ENCODE measurements at regions of chr3 and their contacts with region 1.

Region 1: GRCh38 chr3:13091898-13092611 is 18.8 kb upstream of the IQSEC1 start:
- DNase-seq: peak; percentile 81
- H3K4me3 ChIP-seq: no peak overlapping the region
- H3K27ac ChIP-seq: no peak overlapping the region
- H3K4me1 ChIP-seq: peaks cover 29% of the 10 kb centered on the region
- CTCF ChIP-seq: peak; percentile 91

Region 2: DNA sequence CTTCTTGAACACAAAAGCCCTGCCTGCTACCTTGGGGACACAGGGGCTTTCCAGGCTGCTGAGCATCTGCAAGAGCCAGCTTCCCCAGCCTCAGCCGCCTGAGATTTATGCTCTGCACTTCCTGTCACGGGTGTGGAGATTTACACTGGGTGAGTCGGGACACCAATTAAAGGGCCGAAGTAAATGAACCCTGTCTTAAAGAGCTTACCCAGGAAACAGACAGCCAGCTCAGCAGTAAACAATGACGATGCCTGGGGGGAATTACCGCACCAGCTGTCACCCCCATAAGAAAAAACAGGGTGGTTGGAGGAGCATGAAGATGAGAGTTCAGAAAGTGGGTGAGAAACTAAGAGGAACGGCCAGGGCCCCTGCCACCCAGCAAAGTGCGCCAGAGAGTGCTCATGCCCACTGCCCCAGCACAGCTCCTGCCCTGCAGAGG is 18.6 kb after region 1 on chr3:
- CTCF ChIA-PET with region 1: interaction called, 12 read pairs
- POLR2A ChIA-PET with region 1: interaction called, 3 read pairs
- intact Hi-C with region 1: no loop called
- DNase-seq: peak; percentile 94
- H3K4me3 ChIP-seq: peak overlapping the region; percentile 54
- H3K27ac ChIP-seq: peak overlapping the region; percentile 84
- H3K4me1 ChIP-seq: peaks cover 45% of the 10 kb centered on the region
- CTCF ChIP-seq: no peak

Region 3: GRCh38 chr3:13235079-13235478 is 143.0 kb after region 1 on chr3:
- CTCF ChIA-PET with region 1: no interaction called
- POLR2A ChIA-PET with region 1: no interaction called
- intact Hi-C with region 1: loop called (anchors 10 kb)
- DNase-seq: peak; percentile 86
- H3K4me3 ChIP-seq: peak overlapping the region; percentile 11
- H3K27ac ChIP-seq: peak overlapping the region; percentile 32
- H3K4me1 ChIP-seq: peaks cover 49% of the 10 kb centered on the region
- CTCF ChIP-seq: no peak

Region 4: DNA sequence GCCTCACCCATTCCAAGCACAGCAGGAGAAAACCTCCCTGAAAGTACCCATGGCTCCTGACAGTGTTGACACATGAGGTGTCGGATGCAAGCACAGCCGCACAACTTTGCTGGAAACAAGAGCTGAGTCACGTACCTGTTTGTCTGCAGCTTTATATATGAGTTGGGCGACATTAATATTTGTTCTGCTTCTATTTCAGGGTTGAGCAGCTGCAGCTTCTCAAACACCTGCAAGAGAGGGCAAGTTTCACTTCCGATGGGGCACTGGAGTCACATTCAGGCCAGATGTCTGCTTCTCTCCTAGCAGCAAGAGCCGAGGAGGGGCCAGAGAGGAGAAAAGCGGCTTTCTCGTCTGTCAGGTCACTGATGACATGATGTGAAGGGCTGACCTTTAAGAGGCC is 240.1 kb after region 1 on chr3:
- CTCF ChIA-PET with region 1: no interaction called
- POLR2A ChIA-PET with region 1: no interaction called
- intact Hi-C with region 1: loop called (anchors 2 kb)
- DNase-seq: peak; percentile 98
- H3K4me3 ChIP-seq: peak overlapping the region; percentile 50
- H3K27ac ChIP-seq: peak overlapping the region; percentile 95
- H3K4me1 ChIP-seq: peaks cover 91% of the 10 kb centered on the region
- CTCF ChIP-seq: no peak

Region 5: GRCh38 chr3:13427662-13428603 is 335.9 kb after region 1 on chr3:
- CTCF ChIA-PET with region 1: no interaction called
- POLR2A ChIA-PET with region 1: no interaction called
- intact Hi-C with region 1: loop called (anchors 5 kb)
- DNase-seq: peak; percentile 89
- H3K4me3 ChIP-seq: peak overlapping the region; percentile 53
- H3K27ac ChIP-seq: peak overlapping the region; percentile 92
- H3K4me1 ChIP-seq: peaks cover 57% of the 10 kb centered on the region
- CTCF ChIP-seq: no peak

Region 6: GRCh38 chr3:13461169-13462158 is 369.4 kb after region 1 on chr3:
- CTCF ChIA-PET with region 1: interaction called, 6 read pairs
- POLR2A ChIA-PET with region 1: no interaction called
- intact Hi-C with region 1: loop called (anchors 1 kb)
- DNase-seq: peak; percentile 91
- H3K4me3 ChIP-seq: no peak overlapping the region
- H3K27ac ChIP-seq: no peak overlapping the region
- H3K4me1 ChIP-seq: peaks cover 6% of the 10 kb centered on the region
- CTCF ChIP-seq: peak; percentile 99

Measured in OCI-LY7 (cell line).